Natural killer cell (primary cell): ENCODE measurements at regions of chr1 and their contacts with region 1.

Region 1: GRCh38 chr1:28248283-28249012 is 10.9 kb upstream of the SESN2 start:
- DNase-seq: peak; percentile 79 to 92
- ATAC-seq: peak; percentile 18 to 41 (median 32)
- H3K4me3 ChIP-seq: no peak overlapping the region
- H3K4me3 Mint-ChIP-seq: peak overlapping the region; percentile 95
- H3K27ac ChIP-seq: peak overlapping the region; percentile 87
- H3K27ac Mint-ChIP-seq: peak overlapping the region; percentile 96 to 98
- H3K4me1 ChIP-seq: peaks cover 52% of the 10 kb centered on the region
- H3K4me1 Mint-ChIP-seq: peaks cover 48 to 56% of the 10 kb centered on the region in 2 donors
- H3K27me3 ChIP-seq: no peaks in the 10 kb centered on the region
- H3K27me3 Mint-ChIP-seq: no peaks in the 10 kb centered on the region
- CTCF ChIP-seq: peak; percentile 87

Region 2: GRCh38 chr1:28235755-28236655 is 12.4 kb before region 1 on chr1 and contains the start of gene ATP5IF1:
- intact Hi-C with region 1: loop called (anchors 1 kb)
- DNase-seq: peak; percentile 91 to 98
- ATAC-seq: peak; percentile 94 to 98 (median 95)
- H3K4me3 ChIP-seq: peak within 1 kb of the TSS; percentile 76
- H3K4me3 Mint-ChIP-seq: no peak within 1 kb of the TSS
- H3K27ac ChIP-seq: peak within 1 kb of the TSS; percentile 66
- H3K27ac Mint-ChIP-seq: no peak within 1 kb of the TSS
- H3K4me1 ChIP-seq: peaks cover 39% of the 10 kb centered on the region
- H3K4me1 Mint-ChIP-seq: peaks cover 12 to 13% of the 10 kb centered on the region in 2 donors
- H3K27me3 ChIP-seq: no peaks in the 10 kb centered on the region
- H3K27me3 Mint-ChIP-seq: no peaks in the 10 kb centered on the region
- CTCF ChIP-seq: no peak
- total RNA-seq, gene ATP5IF1: 81.1 to 101 (median 91.1) TPM

Region 3: GRCh38 chr1:28259307-28260167 is 11.1 kb after region 1 on chr1 and contains the start of gene SESN2:
- intact Hi-C with region 1: loop called (anchors 1 kb)
- DNase-seq: peak; percentile 99
- ATAC-seq: peak; percentile 95 to 98 (median 95)
- H3K4me3 ChIP-seq: peak within 1 kb of the TSS; percentile 75
- H3K4me3 Mint-ChIP-seq: peak within 1 kb of the TSS; percentile 84
- H3K27ac ChIP-seq: peak within 1 kb of the TSS; percentile 36
- H3K27ac Mint-ChIP-seq: peak within 1 kb of the TSS; percentile 62 to 87
- H3K4me1 ChIP-seq: peaks cover 52% of the 10 kb centered on the region
- H3K4me1 Mint-ChIP-seq: peaks cover 40 to 49% of the 10 kb centered on the region in 2 donors
- H3K27me3 ChIP-seq: no peaks in the 10 kb centered on the region
- H3K27me3 Mint-ChIP-seq: no peaks in the 10 kb centered on the region
- CTCF ChIP-seq: no peak
- total RNA-seq, gene SESN2: 21.0 to 30.3 (median 27.1) TPM

Region 4: GRCh38 chr1:28329395-28330153 is 81.1 kb after region 1 on chr1:
- intact Hi-C with region 1: loop called (anchors 2 kb)
- DNase-seq: peak in 1 of 2 donors; percentile 68
- ATAC-seq: peak in 2 of 3 donors; percentile 3 to 14
- H3K4me3 ChIP-seq: peak overlapping the region; percentile 57
- H3K4me3 Mint-ChIP-seq: peak overlapping the region; percentile 97
- H3K27ac ChIP-seq: peak overlapping the region; percentile 87
- H3K27ac Mint-ChIP-seq: peak overlapping the region; percentile 97
- H3K4me1 ChIP-seq: peaks cover 26% of the 10 kb centered on the region
- H3K4me1 Mint-ChIP-seq: peaks cover 25 to 43% of the 10 kb centered on the region in 2 donors
- H3K27me3 ChIP-seq: no peaks in the 10 kb centered on the region
- H3K27me3 Mint-ChIP-seq: no peaks in the 10 kb centered on the region
- CTCF ChIP-seq: no peak

Region 5: DNA sequence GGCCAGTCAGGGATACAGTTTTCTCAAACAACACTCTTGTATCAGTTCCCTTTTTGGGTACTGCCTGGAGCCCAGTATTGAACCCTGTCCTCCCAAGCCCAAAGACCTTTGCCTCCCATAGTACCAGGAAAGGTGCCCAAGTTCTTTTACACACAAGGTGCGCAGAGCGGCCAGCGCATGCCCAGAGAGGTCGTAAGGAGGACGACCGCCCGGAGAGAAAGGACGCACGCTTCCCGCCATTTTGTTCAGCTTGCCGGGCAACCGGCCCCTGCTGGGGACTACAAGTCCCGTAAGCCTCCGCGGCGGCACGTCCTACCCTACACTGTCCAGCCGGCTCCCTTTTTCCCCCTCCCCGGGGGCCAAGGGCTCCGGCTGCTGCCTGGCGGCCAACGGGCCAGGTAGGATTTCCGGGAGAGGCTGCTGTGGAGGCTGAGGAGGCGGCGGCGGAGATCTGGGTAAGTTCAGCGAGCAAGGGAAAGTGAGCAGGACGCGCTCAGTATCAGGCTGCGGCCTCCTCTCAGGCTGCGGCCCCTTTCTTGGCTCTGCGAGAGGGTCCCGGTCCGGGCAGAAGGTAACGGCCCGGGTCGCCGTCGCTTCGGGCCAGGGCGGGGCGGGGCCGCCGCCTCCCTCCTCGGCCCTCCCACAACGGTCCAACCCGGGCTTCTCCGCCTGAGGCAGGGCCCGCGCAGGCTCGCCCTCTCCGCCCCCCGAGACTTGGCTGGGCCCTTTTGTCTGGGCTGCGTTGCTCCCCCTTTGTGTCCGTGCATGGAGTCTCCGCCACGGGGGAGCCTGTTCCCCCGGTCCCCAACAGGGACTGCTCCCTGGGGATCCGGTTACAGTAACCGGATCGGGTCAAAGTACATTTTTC is 121.2 kb after region 1 on chr1 and contains the start of gene PHACTR4:
- intact Hi-C with region 1: loop called (anchors 5 kb)
- DNase-seq: peak; percentile 69 to 87
- ATAC-seq: peak; percentile 88 to 95 (median 88)
- H3K4me3 ChIP-seq: peak within 1 kb of the TSS; percentile 95
- H3K4me3 Mint-ChIP-seq: peak within 1 kb of the TSS; percentile 89
- H3K27ac ChIP-seq: peak within 1 kb of the TSS; percentile 90
- H3K27ac Mint-ChIP-seq: peak within 1 kb of the TSS; percentile 78 to 89
- H3K4me1 ChIP-seq: peaks cover 49% of the 10 kb centered on the region
- H3K4me1 Mint-ChIP-seq: peaks cover 41 to 44% of the 10 kb centered on the region in 2 donors
- H3K27me3 ChIP-seq: no peaks in the 10 kb centered on the region
- H3K27me3 Mint-ChIP-seq: no peaks in the 10 kb centered on the region
- CTCF ChIP-seq: no peak
- total RNA-seq, gene PHACTR4: 35.2 to 50.9 (median 44.2) TPM

Region 6: DNA sequence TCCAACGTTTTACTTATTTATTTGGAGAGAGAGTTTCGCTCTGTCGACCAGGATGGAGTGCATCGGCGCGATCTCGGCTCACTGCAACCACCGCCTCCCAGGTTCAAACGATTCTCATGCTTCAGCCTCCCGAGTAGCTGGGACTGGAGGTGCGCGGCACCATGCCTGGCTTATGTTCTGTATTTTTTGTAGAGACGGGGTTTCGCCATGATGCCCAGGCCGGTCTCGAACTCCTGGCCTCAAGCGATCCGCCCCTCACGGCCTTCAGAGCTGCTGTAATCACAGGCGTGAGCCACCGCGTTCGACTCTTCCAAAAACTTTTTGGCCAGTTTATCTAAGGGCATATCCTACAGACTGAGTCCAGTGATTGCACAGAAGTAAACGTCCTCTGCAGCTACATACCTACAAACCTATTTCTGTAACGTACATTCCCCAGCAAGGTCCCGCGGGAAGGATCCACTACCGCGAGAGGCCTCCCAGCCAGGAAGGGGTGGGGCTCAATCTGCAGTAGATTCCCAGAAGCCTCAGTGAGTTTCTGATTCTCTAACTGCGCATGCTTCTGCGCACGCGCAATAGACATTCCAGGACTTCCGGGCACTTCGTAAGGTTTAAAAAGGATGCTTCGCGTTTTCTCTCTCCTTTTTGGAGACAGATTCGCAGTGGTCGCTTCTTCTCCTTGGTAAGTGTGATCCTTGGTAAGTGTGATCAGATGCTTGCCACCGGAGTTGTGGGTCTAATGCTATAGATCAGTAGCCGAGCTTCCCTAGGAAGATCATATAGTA is 257.1 kb after region 1 on chr1 and contains the start of gene RCC1:
- intact Hi-C with region 1: loop called (anchors 5 kb)
- DNase-seq: peak; percentile 87 to 99
- ATAC-seq: peak; percentile 93 to 96 (median 95)
- H3K4me3 ChIP-seq: peak within 1 kb of the TSS; percentile 80
- H3K4me3 Mint-ChIP-seq: peak within 1 kb of the TSS; percentile 99
- H3K27ac ChIP-seq: peak within 1 kb of the TSS; percentile 77
- H3K27ac Mint-ChIP-seq: peak within 1 kb of the TSS; percentile 97 to 99
- H3K4me1 ChIP-seq: peaks cover 43% of the 10 kb centered on the region
- H3K4me1 Mint-ChIP-seq: peaks cover 47 to 50% of the 10 kb centered on the region in 2 donors
- H3K27me3 ChIP-seq: no peaks in the 10 kb centered on the region
- H3K27me3 Mint-ChIP-seq: no peaks in the 10 kb centered on the region
- CTCF ChIP-seq: no peak
- total RNA-seq, gene RCC1: 15.9 to 23.7 (median 19.2) TPM

Region 7: DNA sequence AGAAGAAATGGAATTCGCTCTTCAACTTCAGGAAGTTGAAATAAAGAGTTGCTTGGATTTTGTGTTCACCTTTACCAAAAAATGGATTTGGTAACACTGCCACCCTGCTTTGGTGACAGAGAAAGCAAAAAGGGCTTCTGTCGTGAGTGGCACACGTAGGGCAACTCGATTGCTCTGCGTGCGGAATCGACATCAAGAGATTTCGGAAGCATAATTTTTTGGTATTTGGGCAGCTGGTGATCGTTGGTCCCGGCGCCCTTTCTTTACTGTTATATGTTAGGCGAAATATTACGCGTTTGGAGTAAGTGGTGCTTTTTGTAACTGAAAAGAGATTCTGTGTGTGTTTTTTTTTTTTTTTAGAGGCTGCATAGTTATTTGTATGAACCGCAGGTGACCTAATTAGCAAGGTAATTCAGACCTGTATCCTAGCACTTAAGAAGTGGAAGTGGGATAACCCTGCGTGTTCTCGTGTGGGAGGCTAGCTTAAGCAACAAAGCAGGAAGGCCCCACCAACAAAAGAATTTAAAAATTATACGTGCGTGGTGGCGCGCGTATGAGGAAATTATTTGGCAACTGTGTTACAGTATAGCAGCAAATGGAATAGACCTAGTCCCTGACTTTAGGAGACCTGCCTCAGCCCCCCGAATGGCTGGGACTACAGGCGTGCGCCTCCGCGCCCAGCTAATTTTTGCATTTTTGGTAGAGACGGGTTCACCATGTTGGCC is 400.2 kb after region 1 on chr1 and contains the start of gene RNU11:
- intact Hi-C with region 1: loop called (anchors 5 kb)
- DNase-seq: peak; percentile 80 to 96
- ATAC-seq: peak; percentile 72 to 91 (median 77)
- H3K4me3 ChIP-seq: peak within 1 kb of the TSS; percentile 38
- H3K4me3 Mint-ChIP-seq: peak within 1 kb of the TSS; percentile 89
- H3K27ac ChIP-seq: peak within 1 kb of the TSS; percentile 95
- H3K27ac Mint-ChIP-seq: peak within 1 kb of the TSS; percentile 96 to 100
- H3K4me1 ChIP-seq: peaks cover 34% of the 10 kb centered on the region
- H3K4me1 Mint-ChIP-seq: peaks cover 25 to 27% of the 10 kb centered on the region in 2 donors
- H3K27me3 ChIP-seq: no peaks in the 10 kb centered on the region
- H3K27me3 Mint-ChIP-seq: no peaks in the 10 kb centered on the region
- CTCF ChIP-seq: no peak
- total RNA-seq, gene RNU11: not detected